BJ (cell line): ENCODE measurements at regions of chr14 and their contacts with region 1.

Region 1: DNA sequence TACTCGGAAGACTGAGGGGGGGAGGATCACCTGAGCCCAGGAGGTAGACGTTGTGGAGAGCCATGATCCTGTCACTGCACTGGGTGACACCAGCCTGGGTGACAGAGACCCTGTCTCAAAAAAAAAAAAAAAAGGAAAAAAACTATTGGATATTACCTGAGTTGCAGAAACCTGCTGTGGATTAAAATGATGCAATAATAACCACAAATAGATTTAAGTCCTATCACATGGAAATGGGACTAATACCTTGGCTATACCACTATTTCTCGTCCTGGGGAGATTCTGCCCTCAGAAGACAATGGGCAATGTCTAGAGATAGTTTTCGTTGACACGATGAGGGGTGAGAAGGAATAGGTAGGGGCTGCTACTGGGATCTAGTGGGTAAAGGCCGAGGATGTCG is 17.8 kb downstream of the KLHDC2 start:
- DNase-seq: no peak
- H3K4me3 ChIP-seq: no peak overlapping the region
- H3K27me3 ChIP-seq: no peaks in the 10 kb centered on the region
- CTCF ChIP-seq: no peak

Region 2: DNA sequence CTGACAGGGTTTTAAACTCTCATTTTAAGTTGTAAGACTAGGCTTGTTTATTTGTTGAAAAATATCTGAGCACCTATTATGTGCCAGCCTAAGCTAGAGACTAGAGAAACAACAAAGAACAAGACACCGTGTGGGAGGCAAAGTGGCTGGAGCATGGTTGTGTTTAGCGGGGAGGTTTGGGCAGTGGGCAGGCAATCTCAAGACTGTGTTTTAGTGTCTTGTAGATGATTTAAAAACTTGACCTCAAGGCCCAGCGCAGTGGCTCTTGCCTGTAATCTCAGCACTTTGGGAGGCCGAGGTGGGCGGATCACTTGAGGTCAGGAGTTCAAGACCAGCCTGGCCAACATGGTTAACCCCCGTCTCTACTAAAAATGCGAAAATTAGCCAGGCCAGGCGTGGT is 173.1 kb before region 1 on chr14:
- CTCF ChIA-PET with region 1: no interaction called
- POLR2A ChIA-PET with region 1: no interaction called
- DNase-seq: no peak
- H3K4me3 ChIP-seq: no peak overlapping the region
- H3K27me3 ChIP-seq: no peaks in the 10 kb centered on the region
- CTCF ChIP-seq: no peak

Region 3: GRCh38 chr14:49745191-49745590 is 40.6 kb before region 1 on chr14:
- CTCF ChIA-PET with region 1: no interaction called
- POLR2A ChIA-PET with region 1: interaction called, 24 read pairs
- DNase-seq: no peak
- H3K4me3 ChIP-seq: no peak overlapping the region
- H3K27me3 ChIP-seq: no peaks in the 10 kb centered on the region
- CTCF ChIP-seq: no peak